Dendritic cell treated with granulocyte-macrophage colony-stimulating factor and Interleukin-4, amounts not matched to agents 40 ng/mL and 50 ng/mL, for 4 days (primary cell): ENCODE measurements at regions of chr6 and their contacts with region 1.

Region 1: DNA sequence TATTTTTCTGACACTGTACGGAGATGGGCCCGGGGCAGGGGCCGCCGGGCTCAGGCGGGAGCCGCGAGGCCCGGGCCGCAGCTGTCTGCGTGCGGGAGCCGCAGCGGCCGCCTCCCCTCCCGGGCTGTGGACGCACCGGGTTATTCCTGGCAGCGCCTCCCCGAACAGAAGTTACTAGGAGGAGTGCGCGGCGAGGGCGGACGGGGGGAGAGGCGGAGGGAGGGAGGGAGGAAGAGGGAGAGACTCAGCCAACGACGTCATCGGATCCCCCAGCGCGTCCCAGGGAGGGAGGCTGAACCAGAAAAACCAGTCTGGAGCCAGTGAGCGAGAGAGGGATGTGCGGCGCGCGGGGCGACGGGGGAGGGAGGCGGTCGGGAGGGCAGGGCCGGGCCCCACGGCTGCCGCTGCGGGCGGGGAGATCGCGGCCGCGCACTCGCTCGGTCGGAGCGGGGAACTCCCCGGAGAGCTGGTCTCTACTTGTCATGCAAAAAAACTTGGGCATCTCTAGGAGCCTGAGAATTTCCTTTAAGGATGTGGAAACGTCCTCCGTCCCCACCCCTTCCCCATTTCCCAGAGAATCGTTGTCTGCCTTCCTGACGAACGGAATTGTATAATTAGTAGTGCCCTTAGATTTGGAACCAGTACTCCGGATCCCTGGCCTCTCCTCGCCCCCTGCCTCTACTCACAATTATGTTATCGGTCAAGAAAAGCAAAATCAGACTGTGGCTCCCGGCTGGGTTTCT is 1.4 kb upstream of the HIVEP2 start:
- H3K4me3 Mint-ChIP-seq: peak overlapping the region; percentile 78
- H3K27ac Mint-ChIP-seq: peak overlapping the region; percentile 87
- H3K4me1 Mint-ChIP-seq: peaks cover 38% of the 10 kb centered on the region
- H3K27me3 Mint-ChIP-seq: peaks cover 7% of the 10 kb centered on the region

Region 2: GRCh38 chr6:142013286-142013685 is 933.1 kb before region 1 on chr6:
- intact Hi-C with region 1: no loop called
- H3K4me3 Mint-ChIP-seq: no peak overlapping the region
- H3K27ac Mint-ChIP-seq: no peak overlapping the region
- H3K4me1 Mint-ChIP-seq: no peaks in the 10 kb centered on the region
- H3K27me3 Mint-ChIP-seq: no peaks in the 10 kb centered on the region

Region 3: DNA sequence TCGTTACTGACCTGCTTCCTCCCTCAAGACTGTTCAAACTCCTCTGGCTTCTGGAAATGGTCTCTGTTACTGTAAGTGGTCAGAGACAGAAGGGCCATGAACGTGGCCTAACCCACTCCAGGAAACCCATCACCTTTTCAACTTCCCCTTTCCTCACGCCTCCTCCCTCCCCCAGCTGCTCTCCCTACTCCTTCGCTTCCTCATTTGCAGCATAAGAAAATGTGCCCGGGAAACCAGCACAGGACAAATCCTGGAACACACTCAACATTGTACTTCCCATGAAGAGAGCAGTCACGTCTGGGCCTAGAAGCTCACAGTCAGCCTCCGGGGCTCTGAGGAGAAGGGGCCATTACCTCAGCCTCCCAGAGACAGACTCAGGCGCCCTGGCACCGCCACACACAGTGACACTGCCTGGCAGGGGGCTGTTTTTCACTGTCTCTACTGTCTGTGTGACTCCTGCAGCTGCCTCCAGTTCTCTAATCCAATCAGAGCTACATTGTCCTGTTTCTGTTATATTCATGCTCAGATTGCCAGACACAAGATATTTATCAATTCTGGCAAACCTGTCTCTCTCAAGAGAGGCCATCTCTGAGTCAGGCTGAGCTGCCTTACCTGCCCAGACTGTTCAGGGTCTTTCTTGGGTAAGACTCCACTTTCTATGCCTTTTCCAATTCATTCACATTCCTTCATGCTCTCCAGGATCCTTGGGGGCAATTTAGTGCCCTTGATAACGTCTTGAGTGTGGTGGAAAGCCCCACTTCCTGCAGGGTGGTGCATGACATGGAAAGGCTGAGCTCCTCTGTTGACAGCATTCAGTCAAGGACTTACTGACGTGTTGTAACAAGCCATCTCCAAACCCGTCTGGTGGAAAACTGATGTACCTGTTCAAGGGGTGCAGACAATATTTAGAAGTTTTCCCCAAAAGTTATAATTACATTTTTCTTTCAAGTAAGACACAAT is 243.6 kb before region 1 on chr6:
- intact Hi-C with region 1: loop called (anchors 5 kb)
- H3K4me3 Mint-ChIP-seq: peak overlapping the region; percentile 39
- H3K27ac Mint-ChIP-seq: peak overlapping the region; percentile 78
- H3K4me1 Mint-ChIP-seq: peaks cover 69% of the 10 kb centered on the region
- H3K27me3 Mint-ChIP-seq: peaks cover 8% of the 10 kb centered on the region

Region 4: GRCh38 chr6:143060354-143060805 is 114.0 kb after region 1 on chr6:
- intact Hi-C with region 1: loop called (anchors 5 kb)
- H3K4me3 Mint-ChIP-seq: peak overlapping the region; percentile 82
- H3K27ac Mint-ChIP-seq: peak overlapping the region; percentile 96
- H3K4me1 Mint-ChIP-seq: peaks cover 41% of the 10 kb centered on the region
- H3K27me3 Mint-ChIP-seq: peaks cover 2% of the 10 kb centered on the region

Region 5: GRCh38 chr6:143098054-143098671 is 151.8 kb after region 1 on chr6:
- intact Hi-C with region 1: loop called (anchors 5 kb)
- H3K4me3 Mint-ChIP-seq: no peak overlapping the region
- H3K27ac Mint-ChIP-seq: no peak overlapping the region
- H3K4me1 Mint-ChIP-seq: peaks cover 25% of the 10 kb centered on the region
- H3K27me3 Mint-ChIP-seq: no peaks in the 10 kb centered on the region

Region 6: GRCh38 chr6:143510991-143511891 is 564.9 kb after region 1 on chr6 and contains the start of gene FUCA2:
- intact Hi-C with region 1: loop called (anchors 10 kb)
- H3K4me3 Mint-ChIP-seq: peak within 1 kb of the TSS; percentile 97
- H3K27ac Mint-ChIP-seq: peak within 1 kb of the TSS; percentile 96
- H3K4me1 Mint-ChIP-seq: peaks cover 70% of the 10 kb centered on the region
- H3K27me3 Mint-ChIP-seq: no peaks in the 10 kb centered on the region